ENCODE measurements at regions of chr6 and their contacts with region 1.

Region 1: GRCh38 chr6:446418-447366 is 55.1 kb downstream of the IRF4 start:
- DNase-seq: peak; percentile 89
- ATAC-seq: peak; percentile 83
- H3K4me3 Mint-ChIP-seq: peak overlapping the region; percentile 52
- H3K27ac Mint-ChIP-seq: peak overlapping the region; percentile 93
- H3K4me1 Mint-ChIP-seq: peaks cover 55% of the 10 kb centered on the region
- H3K27me3 Mint-ChIP-seq: no peaks in the 10 kb centered on the region

Region 2: DNA sequence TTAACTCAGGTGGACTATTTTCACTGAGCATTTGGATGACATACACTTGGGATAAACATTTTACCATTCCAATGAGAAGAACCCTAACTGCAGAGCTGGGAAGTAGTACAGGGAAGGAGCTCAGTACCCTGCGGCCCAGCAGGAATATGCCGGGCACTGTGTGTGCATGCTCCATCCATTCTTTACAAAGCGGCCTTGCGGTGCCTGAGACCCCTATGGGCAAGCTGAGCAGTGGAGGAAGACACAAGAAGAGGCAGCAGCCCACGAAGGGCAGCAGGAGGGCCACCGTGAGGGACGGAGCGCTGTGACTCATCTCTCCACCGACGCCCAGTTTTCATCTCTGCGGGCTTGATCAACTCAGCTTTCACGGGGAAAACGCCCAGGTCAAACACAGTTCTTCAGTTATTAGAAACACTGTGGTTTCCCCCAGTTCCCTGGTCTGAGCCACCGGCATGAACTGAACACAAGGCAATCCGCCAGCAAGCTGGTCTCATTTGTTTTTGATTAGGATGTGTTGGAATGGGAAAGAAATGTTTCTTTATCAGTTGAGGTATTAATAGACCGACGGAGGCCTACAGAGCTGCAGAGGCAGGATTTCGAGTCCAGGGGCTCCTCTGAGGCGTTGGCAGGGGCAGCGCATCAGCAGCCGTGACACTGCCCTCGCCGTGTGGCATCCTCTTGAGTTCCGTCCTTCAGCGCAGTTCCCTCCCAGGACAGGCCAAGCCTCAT is 10.2 kb before region 1 on chr6:
- CTCF ChIA-PET with region 1: interaction called, 25 read pairs
- POLR2A ChIA-PET with region 1: interaction called, 53 read pairs
- DNase-seq: no peak
- ATAC-seq: no peak
- H3K4me3 Mint-ChIP-seq: no peak overlapping the region
- H3K27ac Mint-ChIP-seq: peak overlapping the region; percentile 39
- H3K4me1 Mint-ChIP-seq: peaks cover 45% of the 10 kb centered on the region
- H3K27me3 Mint-ChIP-seq: peaks cover 2% of the 10 kb centered on the region

Region 3: DNA sequence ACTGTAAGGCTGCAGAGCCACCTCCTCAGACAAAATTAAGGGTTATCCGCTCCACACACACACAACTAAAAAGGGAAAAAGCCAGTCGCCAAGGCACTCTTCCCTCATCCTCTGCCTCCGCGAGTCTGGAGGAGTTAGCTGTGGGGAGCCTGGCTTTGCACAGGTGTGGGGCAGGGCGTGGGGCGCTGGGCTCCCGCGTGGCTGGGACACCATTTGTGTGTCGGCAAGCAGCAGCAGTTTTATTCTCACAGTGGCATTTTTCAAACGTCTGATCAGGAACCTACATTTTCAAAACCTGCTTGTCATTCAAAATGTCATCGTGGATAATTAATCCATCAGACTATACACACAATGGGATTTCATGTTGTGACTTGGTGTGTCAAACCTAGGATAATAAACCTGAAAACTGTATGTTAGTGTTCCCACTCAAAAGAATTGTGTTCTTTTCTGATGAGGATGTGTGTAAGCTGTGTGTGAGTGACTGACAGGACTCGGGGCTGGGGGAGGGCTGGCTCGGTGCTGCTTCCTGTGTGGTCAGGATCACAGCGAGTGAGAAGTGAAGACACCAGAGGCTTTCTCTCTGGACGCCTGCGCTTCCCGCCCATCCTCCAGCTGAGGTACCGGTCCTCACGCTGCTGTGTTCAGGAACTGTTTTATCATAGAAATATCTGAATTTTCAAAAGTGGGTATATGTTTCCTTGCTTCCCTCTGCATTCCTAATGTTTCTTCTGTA is 27.9 kb after region 1 on chr6:
- CTCF ChIA-PET with region 1: interaction called, 16 read pairs
- POLR2A ChIA-PET with region 1: interaction called, 9 read pairs
- DNase-seq: peak; percentile 93
- ATAC-seq: peak; percentile 100
- H3K4me3 Mint-ChIP-seq: peak overlapping the region; percentile 62
- H3K27ac Mint-ChIP-seq: peak overlapping the region; percentile 96
- H3K4me1 Mint-ChIP-seq: peaks cover 64% of the 10 kb centered on the region
- H3K27me3 Mint-ChIP-seq: no peaks in the 10 kb centered on the region

Region 4: DNA sequence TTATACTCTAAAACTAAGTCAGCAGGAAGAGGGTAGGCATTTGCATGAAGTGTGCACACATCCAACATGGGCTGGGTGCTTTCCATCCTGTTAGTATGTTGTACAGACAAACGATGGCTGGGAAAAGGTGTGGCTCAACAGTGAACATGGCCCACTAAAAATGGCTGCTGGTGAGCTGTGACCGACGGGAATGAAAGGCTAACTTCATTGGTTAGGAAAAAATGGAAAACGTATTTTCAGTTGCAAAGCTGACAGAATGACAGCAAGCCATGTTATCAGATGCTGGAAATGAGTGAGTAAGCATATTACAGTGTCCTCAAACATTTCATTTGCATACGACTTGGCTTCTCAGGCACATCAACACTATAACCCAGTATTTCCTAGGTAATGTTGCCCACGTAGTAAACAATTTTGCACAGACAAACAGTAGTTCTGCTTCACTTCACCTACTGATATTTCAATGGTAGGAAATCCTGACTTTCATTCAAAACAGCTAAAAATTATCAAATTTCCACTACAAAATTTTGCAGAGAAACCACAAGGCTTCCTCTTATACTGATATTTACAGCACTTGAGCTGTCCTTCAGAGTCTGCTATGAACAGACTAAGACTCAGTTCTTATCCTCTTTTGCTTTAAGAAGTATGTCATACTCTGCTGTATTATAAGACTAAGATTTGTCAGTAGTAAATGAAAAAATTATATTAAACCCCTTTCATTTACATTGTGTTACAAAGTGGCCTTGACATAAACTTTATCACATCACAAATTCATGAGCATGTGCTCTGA is 43.8 kb after region 1 on chr6:
- CTCF ChIA-PET with region 1: interaction called, 19 read pairs
- POLR2A ChIA-PET with region 1: interaction called, 29 read pairs
- DNase-seq: peak; percentile 38
- ATAC-seq: peak; percentile 58
- H3K4me3 Mint-ChIP-seq: peak overlapping the region; percentile 64
- H3K27ac Mint-ChIP-seq: peak overlapping the region; percentile 93
- H3K4me1 Mint-ChIP-seq: peaks cover 76% of the 10 kb centered on the region
- H3K27me3 Mint-ChIP-seq: no peaks in the 10 kb centered on the region

Region 5: DNA sequence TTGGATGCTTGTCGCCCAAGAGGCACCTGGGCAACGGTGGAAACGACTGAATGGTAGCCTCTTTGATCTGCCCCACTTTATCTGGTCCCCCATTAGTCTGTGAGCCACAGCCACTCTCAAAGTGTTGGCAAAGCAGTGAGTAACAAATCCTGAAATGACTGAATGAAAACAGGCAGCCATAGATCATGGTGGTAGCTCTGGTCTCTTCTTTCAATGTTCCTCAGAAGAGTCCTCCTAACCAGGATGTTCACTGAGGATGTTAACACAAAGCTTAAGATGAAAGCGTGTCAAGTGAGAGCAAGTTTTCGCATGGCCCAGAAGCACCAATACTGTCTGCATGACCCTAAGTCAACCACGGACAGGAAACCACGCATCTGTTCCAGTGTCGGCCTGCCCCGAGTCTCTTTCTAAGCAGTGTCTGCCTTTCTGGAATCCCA is 52.1 kb after region 1 on chr6:
- CTCF ChIA-PET with region 1: interaction called, 7 read pairs
- POLR2A ChIA-PET with region 1: interaction called, 23 read pairs
- DNase-seq: peak; percentile 83
- ATAC-seq: peak; percentile 79
- H3K4me3 Mint-ChIP-seq: peak overlapping the region; percentile 71
- H3K27ac Mint-ChIP-seq: peak overlapping the region; percentile 89
- H3K4me1 Mint-ChIP-seq: peaks cover 75% of the 10 kb centered on the region
- H3K27me3 Mint-ChIP-seq: no peaks in the 10 kb centered on the region

Region 6: GRCh38 chr6:558089-558488 is 111.4 kb after region 1 on chr6:
- CTCF ChIA-PET with region 1: no interaction called
- POLR2A ChIA-PET with region 1: no interaction called
- DNase-seq: no peak
- ATAC-seq: no peak
- H3K4me3 Mint-ChIP-seq: no peak overlapping the region
- H3K27ac Mint-ChIP-seq: no peak overlapping the region
- H3K4me1 Mint-ChIP-seq: peaks cover 22% of the 10 kb centered on the region
- H3K27me3 Mint-ChIP-seq: no peaks in the 10 kb centered on the region

Measured in activated CD8-positive, alpha-beta T cell treated with anti-CD3 and anti-CD28 coated beads, Interleukin-2, amount 10 ng/mL, durations not matched to agents 7 days and 5 days (primary cell).